ENCODE measurements at regions of chr1 and their contacts with region 1.

Region 1: DNA sequence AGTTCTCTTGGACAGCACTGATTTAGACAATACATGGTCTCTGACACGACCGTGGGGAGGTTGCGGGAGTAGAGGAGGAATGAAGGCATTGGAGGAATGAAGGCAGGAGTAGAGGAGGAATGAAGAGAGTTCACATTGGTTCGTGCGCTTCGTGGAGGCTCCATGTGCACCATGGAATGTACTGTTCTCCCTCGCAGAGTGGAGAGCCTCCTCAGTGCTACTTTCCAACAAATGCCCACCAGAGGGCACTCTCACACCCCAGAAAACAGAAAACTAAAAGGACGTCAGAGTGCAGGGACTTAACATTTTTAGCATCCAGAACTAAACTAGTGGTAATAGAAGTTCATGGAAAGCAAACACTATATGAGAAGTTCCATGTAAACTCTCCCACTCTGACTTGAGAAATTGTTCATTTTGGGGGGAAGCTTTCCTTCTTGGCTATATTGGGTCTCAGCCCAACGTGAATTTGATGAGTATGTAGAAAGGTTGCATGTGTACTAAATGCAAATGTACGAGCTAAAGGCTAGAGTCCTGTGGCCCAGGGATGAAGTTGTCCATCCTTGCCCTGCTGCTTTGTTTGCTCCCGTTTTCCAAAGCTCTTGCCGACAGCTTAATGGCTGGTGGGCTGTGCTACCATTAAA is 211.6 kb downstream of the LMX1A start:
- DNase-seq: peak in 1 of 2 experiments; percentile 56
- H3K4me3 ChIP-seq: no peak overlapping the region
- H3K27ac ChIP-seq: no peak overlapping the region
- H3K4me1 ChIP-seq: no peaks in the 10 kb centered on the region
- H3K27me3 ChIP-seq: no peaks in the 10 kb centered on the region
- CTCF ChIP-seq: peak; percentile 85

Region 2: GRCh38 chr1:163410073-163410999 is 1734.5 kb before region 1 on chr1:
- CTCF ChIA-PET with region 1: no interaction called
- POLR2A ChIA-PET with region 1: no interaction called
- intact Hi-C with region 1: loop called (anchors 2 kb)
- DNase-seq: peak; percentile 27 to 36
- H3K4me3 ChIP-seq: no peak overlapping the region
- H3K27ac ChIP-seq: no peak overlapping the region
- H3K4me1 ChIP-seq: no peaks in the 10 kb centered on the region
- H3K27me3 ChIP-seq: no peaks in the 10 kb centered on the region
- CTCF ChIP-seq: peak; percentile 94

Region 3: DNA sequence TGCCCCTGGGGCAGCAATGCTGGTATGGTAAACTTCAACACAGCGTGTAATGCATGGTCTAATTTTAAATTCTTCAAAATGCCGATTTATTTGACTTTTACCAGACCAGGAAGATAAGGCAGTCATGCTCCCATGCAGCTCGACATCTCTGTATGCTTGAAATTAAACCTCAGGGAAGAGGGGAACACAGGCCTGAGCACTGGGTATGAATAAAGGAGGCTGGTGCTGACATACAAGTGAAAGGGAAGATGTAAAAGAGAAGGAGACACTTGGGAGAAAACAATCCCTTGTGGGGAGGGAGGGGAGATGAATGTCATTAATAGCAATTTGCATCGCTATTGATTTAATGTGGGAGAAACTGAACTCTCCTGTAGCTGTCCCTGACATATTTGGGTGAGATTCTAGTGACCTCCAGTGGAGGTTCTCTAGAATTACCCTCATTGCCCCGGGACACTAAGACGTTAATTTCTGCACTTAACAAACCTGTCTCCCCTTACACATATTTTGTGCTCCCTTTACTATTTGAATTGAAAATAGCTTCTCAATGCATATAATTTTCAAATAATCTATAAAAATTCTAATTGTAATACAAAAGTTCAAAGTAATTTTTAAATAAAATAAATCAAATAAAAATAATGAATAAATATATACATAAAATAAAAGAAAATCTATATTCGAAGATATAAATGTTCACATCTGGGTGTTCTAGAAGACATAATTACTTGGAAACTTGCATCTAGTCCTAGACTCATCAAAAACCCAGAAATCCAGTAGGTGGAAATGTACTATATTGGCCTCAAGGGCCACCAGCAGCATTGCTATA is 71.5 kb before region 1 on chr1:
- CTCF ChIA-PET with region 1: no interaction called
- POLR2A ChIA-PET with region 1: no interaction called
- intact Hi-C with region 1: no loop called
- DNase-seq: peak; percentile 12 to 46
- H3K4me3 ChIP-seq: no peak overlapping the region
- H3K27ac ChIP-seq: no peak overlapping the region
- H3K4me1 ChIP-seq: no peaks in the 10 kb centered on the region
- H3K27me3 ChIP-seq: no peaks in the 10 kb centered on the region
- CTCF ChIP-seq: peak; percentile 85

Region 4: DNA sequence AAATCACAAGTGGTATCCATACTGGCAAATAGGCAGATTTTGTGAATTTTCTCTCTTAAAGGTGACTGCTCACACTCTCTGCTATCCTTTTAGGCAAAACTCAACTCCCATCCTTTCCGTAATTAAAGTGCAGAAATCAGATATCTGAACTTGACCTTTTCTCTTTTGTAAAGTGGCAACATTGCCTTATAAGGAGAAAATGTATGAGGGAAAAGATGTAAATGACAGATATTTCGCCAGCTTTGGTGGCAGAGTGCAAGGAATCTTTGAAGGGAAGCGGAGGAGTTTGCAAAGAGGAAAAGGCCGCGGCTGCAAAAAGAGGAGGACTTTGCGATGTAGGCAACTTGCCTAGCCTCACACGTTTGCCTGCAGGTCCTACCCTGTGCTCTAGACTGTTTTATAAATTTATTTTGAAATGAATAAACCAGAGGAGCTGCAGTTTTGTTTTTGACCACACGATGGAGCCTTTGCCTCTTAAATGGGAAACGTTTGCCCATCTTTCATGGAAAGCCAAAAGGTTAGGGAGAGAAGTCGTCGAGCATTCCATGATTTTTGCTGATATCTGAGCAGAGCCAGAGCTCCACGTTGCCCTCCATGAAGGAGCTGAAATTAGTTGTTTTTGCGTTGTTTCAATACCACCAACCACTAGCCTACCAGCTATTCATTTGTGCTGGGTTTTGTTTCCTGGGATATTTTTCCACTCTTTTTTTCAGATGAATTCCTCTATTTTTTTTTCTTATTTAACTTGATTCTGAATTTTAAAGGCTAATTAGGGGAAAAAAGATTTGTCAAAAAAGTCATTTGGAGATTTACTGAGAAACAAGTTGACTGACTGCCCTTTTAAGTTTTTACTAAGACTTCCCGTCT is 30.6 kb before region 1 on chr1:
- CTCF ChIA-PET with region 1: no interaction called
- POLR2A ChIA-PET with region 1: no interaction called
- intact Hi-C with region 1: loop called (anchors 1 kb)
- DNase-seq: peak in 1 of 2 experiments; percentile 36
- H3K4me3 ChIP-seq: no peak overlapping the region
- H3K27ac ChIP-seq: no peak overlapping the region
- H3K4me1 ChIP-seq: no peaks in the 10 kb centered on the region
- H3K27me3 ChIP-seq: no peaks in the 10 kb centered on the region
- CTCF ChIP-seq: peak; percentile 93

Region 5: DNA sequence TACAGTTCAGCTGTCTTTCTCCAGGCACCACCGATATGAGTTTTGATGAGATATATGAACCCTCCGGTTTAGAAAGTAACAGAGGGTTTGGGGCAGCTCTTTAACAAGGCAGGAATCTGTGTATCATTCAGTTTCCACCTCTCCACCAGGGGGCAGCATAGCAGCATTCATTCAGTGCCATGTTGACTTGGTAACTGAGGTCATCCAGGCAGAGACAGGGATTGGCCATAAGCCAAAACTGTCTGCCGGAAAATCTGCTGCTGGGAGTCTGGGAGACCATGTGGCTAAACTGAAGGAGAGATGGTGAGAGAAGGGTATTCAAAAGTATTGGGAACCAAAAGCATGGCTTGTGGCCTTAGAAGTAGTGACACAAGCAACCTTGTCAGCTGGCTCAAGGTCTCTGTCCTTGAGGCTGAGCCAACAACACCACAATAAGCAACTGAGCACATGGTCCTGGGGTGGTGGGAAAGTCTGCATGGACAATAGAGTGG is 113.1 kb after region 1 on chr1:
- CTCF ChIA-PET with region 1: no interaction called
- POLR2A ChIA-PET with region 1: no interaction called
- intact Hi-C with region 1: loop called (anchors 2 kb)
- DNase-seq: peak in 1 of 2 experiments; percentile 32
- H3K4me3 ChIP-seq: no peak overlapping the region
- H3K27ac ChIP-seq: no peak overlapping the region
- H3K4me1 ChIP-seq: no peaks in the 10 kb centered on the region
- H3K27me3 ChIP-seq: no peaks in the 10 kb centered on the region; the same call in 1 of the 2 replicates
- CTCF ChIP-seq: peak; percentile 82

Region 6: GRCh38 chr1:165369255-165369848 is 224.5 kb after region 1 on chr1:
- CTCF ChIA-PET with region 1: interaction called, 4 read pairs
- POLR2A ChIA-PET with region 1: no interaction called
- intact Hi-C with region 1: loop called (anchors 1 kb)
- DNase-seq: peak in 1 of 2 experiments; percentile 25
- H3K4me3 ChIP-seq: no peak overlapping the region
- H3K27ac ChIP-seq: no peak overlapping the region
- H3K4me1 ChIP-seq: no peaks in the 10 kb centered on the region
- H3K27me3 ChIP-seq: no peaks in the 10 kb centered on the region
- CTCF ChIP-seq: peak; percentile 88

Measured in PC-9 (cell line).